ENCODE measurements at regions of chr18 and their contacts with region 1.

Region 1: GRCh38 chr18:11995445-11996189 is 14.3 kb downstream of the IMPA2 start:
- DNase-seq: peak; percentile 74
- H3K4me3 ChIP-seq: no peak overlapping the region; a peak in 1 of 4 replicates
- H3K27ac ChIP-seq: no peak overlapping the region
- H3K4me1 ChIP-seq: no peaks in the 10 kb centered on the region
- H3K27me3 ChIP-seq: peaks cover 79% of the 10 kb centered on the region
- CTCF ChIP-seq: peak; percentile 63
- EP300 ChIP-seq: no peak
- RAD21 ChIP-seq: peak; percentile 75

Region 2: DNA sequence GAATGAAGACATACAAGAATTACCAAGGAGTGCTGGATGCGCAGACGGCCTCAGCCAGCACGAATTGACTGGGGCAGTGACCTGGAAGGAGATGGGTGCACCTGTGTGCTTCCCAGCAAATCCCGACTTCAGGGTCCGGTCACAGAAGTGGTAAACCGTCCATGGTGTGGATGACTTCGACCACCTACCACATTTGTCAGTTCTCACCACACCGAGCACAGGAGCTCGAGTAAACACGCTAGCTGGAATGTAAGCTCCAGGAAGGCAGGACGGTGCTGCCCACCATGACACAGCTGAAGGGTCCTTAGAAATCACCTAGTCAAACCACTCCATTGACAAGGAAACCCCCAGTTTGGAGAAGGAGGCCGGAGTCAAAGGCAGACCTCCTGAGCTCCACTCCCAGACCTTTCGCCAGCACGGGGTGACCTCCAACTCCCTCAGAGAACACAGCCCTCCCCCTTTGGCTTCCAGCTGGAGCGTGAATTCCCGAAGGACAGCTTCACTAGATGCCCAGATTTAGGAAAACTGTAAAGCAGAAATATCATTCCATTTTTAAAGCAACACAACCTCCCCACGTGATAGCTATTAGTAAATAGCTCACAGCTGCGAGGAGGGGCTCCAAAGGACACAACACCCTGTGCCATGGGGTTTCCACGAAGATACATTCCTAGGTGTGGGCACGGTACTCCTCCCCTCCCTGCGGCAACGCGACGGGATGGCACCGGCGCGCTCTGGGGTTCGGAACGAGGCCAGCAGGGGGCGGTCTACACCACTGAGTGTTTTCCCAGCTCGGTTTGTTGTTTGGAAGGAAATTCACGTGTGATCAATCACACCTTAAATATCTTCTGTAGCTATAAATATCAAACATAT is 340.6 kb before region 1 on chr18:
- CTCF ChIA-PET with region 1: interaction called, 12 read pairs
- POLR2A ChIA-PET with region 1: no interaction called
- DNase-seq: peak; percentile 59
- H3K4me3 ChIP-seq: peak overlapping the region in 1 of 2 experiments; percentile 55; a peak in 1 of 4 replicates
- H3K27ac ChIP-seq: no peak overlapping the region
- H3K4me1 ChIP-seq: no peaks in the 10 kb centered on the region
- H3K27me3 ChIP-seq: peaks cover 51% of the 10 kb centered on the region
- CTCF ChIP-seq: peak; percentile 73
- EP300 ChIP-seq: no peak
- RAD21 ChIP-seq: peak; percentile 61

Region 3: GRCh38 chr18:11733031-11733430 is 262.6 kb before region 1 on chr18:
- CTCF ChIA-PET with region 1: interaction called, 22 read pairs
- POLR2A ChIA-PET with region 1: no interaction called
- DNase-seq: peak; percentile 75
- H3K4me3 ChIP-seq: peak overlapping the region in 1 of 2 experiments; percentile 48; a peak in 3 of 4 replicates
- H3K27ac ChIP-seq: no peak overlapping the region
- H3K4me1 ChIP-seq: no peaks in the 10 kb centered on the region; a peak in 1 of 4 replicates
- H3K27me3 ChIP-seq: peaks cover 69% of the 10 kb centered on the region
- CTCF ChIP-seq: peak; percentile 85
- EP300 ChIP-seq: no peak
- RAD21 ChIP-seq: peak; percentile 76

Region 4: DNA sequence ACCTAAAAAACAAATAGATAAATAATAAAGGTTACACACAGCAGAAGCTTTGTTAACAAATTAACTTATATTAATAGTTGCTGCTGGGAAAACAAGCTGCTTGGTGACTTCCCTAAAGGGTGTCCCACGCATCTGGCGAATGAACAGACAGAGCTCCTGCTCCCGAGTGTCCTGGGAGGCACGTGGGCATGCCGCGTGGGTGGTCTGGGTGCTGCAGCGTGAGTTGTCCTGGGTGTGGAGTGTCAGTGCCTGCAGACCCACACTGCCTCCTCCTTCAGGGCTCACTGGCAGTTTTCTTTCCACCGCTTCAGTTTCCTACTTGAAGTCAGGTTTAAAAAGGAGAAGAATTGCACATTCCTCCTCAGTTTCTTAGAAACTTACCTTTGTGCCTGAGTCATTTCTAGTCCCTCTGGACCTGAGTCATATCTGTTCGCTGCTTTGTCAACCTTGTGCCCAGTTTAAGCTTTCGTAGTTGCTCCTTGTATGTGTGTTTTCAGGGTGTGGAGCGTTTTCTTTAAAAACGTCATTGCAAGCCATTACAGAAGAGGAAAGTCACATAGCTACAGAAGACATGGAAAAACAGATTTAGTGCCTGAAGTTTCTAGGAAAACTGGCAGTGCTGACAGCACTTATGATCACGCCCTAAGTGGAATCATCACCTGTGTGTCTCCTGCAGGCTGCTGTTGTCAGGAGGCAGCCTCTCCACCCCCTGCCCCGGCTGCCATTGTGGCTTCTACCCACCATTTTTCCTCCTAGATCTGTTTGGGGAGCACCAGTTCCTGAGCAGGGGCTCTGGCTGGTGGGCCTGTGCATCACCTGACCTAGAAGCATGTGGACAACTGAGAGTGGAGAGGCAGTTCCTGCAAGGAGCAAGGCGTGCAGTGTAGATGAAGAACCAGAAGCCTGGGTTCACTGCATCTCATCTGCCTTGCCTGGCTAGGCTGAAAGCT is 10.2 kb after region 1 on chr18:
- CTCF ChIA-PET with region 1: interaction called, 18 read pairs
- POLR2A ChIA-PET with region 1: no interaction called
- DNase-seq: no peak
- H3K4me3 ChIP-seq: no peak overlapping the region
- H3K27ac ChIP-seq: no peak overlapping the region
- H3K4me1 ChIP-seq: no peaks in the 10 kb centered on the region
- H3K27me3 ChIP-seq: peaks cover 73% of the 10 kb centered on the region
- CTCF ChIP-seq: no peak
- EP300 ChIP-seq: no peak
- RAD21 ChIP-seq: no peak

Region 5: DNA sequence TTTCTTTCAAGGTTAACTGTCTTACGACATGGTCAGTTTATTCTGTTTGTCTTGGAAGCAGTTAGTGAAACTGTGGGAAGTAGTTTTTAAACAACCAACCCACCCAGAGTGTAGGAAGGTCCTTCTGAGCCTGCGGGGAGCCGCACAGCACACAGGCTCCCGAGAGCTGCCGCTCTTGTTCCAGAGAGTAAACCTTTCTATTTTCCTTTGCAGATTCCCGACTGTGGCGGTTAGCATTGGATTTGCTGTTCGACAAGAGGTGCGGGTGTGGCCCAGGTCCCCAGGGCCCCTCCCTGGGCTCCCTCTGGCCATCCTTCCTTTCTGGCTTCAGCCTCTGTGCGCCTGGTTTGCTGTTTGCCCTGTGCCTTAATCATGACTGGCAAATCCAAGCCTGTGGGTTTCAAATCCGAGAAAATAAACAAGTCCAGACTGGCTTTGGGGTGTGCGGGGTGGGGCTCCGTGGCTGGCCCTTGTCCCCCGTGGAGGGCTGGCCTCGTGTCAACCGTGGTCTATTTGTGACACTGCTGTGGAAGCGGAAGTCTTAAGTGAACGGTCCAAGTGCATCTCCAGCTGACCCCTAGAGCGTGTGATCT is 16.4 kb after region 1 on chr18:
- CTCF ChIA-PET with region 1: interaction called, 23 read pairs
- POLR2A ChIA-PET with region 1: no interaction called
- DNase-seq: no peak
- H3K4me3 ChIP-seq: no peak overlapping the region
- H3K27ac ChIP-seq: no peak overlapping the region
- H3K4me1 ChIP-seq: no peaks in the 10 kb centered on the region
- H3K27me3 ChIP-seq: peaks cover 91% of the 10 kb centered on the region
- CTCF ChIP-seq: no peak
- EP300 ChIP-seq: no peak
- RAD21 ChIP-seq: no peak

Region 6: DNA sequence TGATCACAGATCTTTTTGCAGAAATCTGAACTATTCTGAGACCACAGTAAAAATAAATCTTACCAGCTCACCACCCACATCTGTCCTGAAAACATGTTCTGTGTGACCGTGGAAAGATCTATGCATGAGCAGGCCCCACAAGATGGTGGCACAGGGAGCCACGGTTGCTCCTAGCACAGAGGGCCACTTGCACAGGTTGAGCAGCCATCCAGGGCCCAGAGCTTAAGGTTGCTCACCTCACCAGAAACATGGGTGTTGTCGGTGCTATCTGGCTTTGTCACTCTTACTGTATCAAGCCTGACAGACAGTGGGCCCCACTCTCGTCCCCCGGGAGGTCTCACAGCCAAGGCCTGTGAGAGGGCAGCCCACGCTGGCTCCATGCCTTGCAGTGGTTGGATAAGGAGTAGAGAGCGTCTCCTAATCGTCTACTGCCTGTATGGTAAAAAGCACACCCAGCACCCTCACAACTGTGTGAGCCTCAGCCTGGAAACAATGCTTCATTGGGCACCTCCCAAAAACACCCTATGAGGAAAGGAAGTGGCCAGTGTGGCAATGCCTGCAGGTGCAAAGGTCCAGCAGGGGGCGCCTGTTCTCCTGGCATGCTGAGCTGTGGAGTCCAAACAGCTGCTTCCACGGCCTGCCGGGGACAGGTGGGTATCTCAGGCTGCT is 332.0 kb after region 1 on chr18:
- CTCF ChIA-PET with region 1: no interaction called
- POLR2A ChIA-PET with region 1: no interaction called
- DNase-seq: peak; percentile 82
- H3K4me3 ChIP-seq: no peak overlapping the region; a peak in 1 of 4 replicates
- H3K27ac ChIP-seq: 0 out of 4 replicates have a peak overlapping the region, but pooled peaks of 1 of the 2 experiments have one; percentile 13
- H3K4me1 ChIP-seq: peaks cover 0 to 17% of the 10 kb centered on the region in 2 experiments; a peak in 1 of 4 replicates
- H3K27me3 ChIP-seq: no peaks in the 10 kb centered on the region
- CTCF ChIP-seq: peak; percentile 91
- EP300 ChIP-seq: no peak
- RAD21 ChIP-seq: peak; percentile 52

Measured in SK-N-SH (cell line).